ENCODE measurements at regions of chr11 and their contacts with region 1.

Region 1: DNA sequence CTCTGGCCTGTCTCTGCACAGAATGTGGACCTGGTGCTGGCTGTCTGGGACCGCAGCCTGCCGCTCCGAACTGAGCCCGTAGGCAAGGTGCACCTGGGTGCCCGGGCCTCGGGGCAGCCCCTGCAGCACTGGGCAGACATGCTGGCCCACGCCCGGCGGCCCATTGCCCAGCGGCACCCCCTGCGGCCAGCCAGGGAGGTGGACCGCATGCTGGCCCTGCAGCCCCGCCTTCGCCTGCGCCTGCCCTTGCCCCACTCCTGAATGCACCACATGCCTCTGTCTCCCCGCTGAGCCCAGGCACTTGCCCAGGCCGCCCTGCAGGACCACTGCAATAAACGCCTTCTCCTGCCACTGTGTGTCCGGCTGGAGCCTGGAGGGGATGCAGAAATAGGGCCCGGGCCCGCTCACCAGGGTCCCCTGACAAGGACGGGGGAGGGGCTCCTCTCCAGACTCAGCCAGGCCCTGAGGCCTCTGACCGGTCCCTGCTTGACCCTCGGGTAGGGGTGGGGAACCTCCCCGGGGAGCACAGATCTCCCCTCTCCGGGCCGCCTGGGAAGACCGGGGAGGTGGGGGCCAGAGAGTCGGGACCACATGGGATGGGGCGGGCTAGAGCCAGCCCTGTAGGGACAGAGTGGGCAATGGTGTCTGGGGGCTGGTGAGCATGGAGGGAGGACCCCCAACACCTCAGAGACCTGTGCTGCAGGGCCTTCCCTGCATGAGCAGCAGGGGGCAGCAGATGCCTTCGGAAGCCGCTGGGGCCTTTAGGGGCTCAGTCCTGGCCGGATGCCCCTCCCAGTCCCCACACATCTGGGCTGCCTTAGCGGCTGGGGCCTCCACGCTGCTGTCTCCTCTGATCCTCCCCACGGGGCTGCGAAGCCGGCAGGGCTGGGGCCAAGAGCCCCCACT is 1.4 kb upstream of the TNNI2 start:
- H3K4me3 Mint-ChIP-seq: no peak overlapping the region
- H3K27ac Mint-ChIP-seq: no peak overlapping the region
- H3K4me1 Mint-ChIP-seq: peaks cover 56% of the 10 kb centered on the region
- H3K27me3 Mint-ChIP-seq: peaks cover 34% of the 10 kb centered on the region

Region 2: DNA sequence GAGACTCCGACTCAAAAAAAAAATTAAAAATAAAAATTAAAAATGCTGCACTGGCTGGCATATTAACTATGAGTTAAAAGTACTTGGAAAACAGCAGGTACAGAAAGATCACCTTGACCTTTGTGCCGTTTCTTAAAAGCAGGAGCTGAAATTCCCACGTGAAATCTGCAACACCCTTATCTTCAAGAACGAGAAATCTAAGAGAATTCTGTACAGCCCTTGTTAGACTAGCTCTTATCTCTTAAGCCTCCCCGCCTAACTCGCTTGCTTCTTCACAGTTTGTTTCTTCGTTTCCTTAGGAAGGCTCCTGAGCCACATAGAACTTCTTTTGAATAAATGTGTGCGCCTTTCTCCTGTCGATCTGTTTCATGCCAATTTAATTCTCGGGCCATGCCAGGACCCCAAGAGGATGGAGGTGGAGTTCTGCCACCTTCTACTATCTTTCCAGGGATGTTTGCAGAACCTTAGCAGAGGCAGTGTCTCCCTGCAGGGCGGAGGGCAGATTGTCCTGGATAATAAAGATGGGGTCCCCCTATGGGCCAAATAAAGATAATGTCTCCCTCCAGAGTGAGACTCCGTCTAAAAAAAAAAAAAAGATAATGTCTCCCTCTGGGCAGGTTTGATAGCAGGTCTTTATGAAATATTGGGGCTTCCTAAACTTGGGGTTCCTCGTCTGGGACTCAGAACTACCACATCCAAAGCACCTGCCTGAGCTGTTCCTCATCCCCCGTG is 30.0 kb before region 1 on chr11:
- intact Hi-C with region 1: no loop called
- H3K4me3 Mint-ChIP-seq: no peak overlapping the region
- H3K27ac Mint-ChIP-seq: no peak overlapping the region
- H3K4me1 Mint-ChIP-seq: peaks cover 7% of the 10 kb centered on the region
- H3K27me3 Mint-ChIP-seq: peaks cover 85% of the 10 kb centered on the region

Region 3: GRCh38 chr11:1852877-1853276 is 15.5 kb after region 1 on chr11 and contains the start of gene LSP1:
- intact Hi-C with region 1: loop called (anchors 1 kb)
- H3K4me3 Mint-ChIP-seq: peak within 1 kb of the TSS; percentile 88
- H3K27ac Mint-ChIP-seq: peak within 1 kb of the TSS; percentile 86
- H3K4me1 Mint-ChIP-seq: peaks cover 97% of the 10 kb centered on the region
- H3K27me3 Mint-ChIP-seq: no peaks in the 10 kb centered on the region

Region 4: DNA sequence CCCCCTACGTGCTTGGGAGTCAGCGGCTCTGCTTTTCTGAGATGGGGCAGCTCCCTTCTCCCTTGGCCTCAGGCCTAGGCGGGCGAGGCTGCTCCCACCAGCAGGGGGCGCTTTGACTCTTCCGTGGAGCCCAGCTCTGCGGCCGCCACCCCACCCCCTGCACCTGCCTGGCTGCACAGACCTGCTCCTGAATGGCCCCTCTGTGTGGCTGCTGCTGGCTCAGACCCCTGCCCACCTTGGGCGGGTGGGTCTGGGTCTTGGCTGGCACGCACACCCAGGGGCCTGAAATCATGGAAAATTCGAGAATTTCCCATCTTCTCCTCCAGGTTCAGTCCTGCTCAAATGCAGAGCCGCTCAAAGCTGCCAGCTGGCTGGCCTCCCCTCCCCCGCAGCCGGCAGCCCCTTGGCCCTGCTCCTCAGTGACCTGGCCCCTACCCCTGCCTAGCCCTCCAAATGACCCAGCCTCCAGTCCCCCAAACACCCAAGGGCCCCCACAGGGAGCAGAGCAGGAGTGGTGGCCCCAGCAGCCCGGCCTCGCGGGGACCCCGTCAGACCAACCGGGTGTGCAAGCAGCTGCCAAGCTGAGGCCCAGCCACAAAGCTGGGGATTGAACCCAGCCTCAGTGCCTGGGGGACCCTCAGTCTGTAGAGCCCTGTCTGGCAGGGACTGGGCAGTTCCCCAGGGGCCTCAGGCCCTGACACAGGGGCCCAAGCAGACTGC is 45.3 kb after region 1 on chr11:
- intact Hi-C with region 1: no loop called
- H3K4me3 Mint-ChIP-seq: no peak overlapping the region
- H3K27ac Mint-ChIP-seq: peak overlapping the region; percentile 18
- H3K4me1 Mint-ChIP-seq: peaks cover 42% of the 10 kb centered on the region
- H3K27me3 Mint-ChIP-seq: peaks cover 1% of the 10 kb centered on the region

Region 5: GRCh38 chr11:1896923-1897322 is 59.5 kb after region 1 on chr11:
- intact Hi-C with region 1: no loop called
- H3K4me3 Mint-ChIP-seq: peak overlapping the region; percentile 68
- H3K27ac Mint-ChIP-seq: peak overlapping the region; percentile 79
- H3K4me1 Mint-ChIP-seq: peaks cover 33% of the 10 kb centered on the region
- H3K27me3 Mint-ChIP-seq: peaks cover 14% of the 10 kb centered on the region

Region 6: DNA sequence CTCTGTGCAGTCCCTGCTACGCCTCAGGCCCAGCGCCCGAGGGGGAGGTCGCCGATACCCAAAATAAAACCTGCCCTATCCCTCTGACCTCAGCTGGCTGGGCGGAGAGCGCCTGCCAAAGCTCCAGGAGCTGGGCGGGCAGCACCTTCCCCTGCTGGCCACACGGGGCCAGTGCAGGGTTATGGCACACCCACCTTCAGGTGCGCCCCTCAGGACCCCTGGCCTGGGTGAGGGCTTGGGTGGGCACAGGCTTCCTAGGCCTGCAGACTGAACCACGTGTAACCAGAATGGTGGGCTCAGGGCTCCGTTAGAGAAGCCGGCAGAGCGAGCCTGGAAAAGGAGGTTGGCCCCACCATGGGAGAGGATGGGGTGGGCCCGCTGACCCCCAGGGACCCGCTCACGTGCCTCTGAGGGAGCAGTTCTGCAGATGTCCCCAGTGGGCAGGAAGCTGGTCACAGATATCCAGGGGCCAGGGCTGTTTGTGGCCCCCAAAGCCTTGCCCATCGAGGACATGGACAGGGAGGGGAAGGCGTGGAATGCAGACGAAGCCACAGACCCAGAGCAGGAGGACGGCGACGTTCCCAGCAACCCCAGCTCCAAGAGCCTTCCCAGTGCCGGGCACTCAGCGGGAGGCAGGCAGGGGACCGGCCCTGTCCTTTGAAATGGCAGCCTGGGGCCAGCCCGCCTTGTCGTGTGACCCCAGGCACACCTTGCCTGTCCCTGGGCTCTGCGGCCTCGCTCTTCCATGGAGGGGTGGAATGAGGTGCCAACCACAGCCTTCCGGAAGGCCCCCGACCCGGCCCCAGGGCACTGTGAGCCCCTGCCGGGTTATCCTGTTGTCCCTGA is 80.5 kb after region 1 on chr11:
- intact Hi-C with region 1: loop called (anchors 5 kb)
- H3K4me3 Mint-ChIP-seq: no peak overlapping the region
- H3K27ac Mint-ChIP-seq: no peak overlapping the region
- H3K4me1 Mint-ChIP-seq: peaks cover 18% of the 10 kb centered on the region
- H3K27me3 Mint-ChIP-seq: peaks cover 33% of the 10 kb centered on the region